ENCODE measurements at regions of chr5 and their contacts with region 1.

Region 1: GRCh38 chr5:83628360-83628759 is 92.3 kb downstream of the HAPLN1 start:
- DNase-seq: no peak
- H3K4me3 ChIP-seq: no peak overlapping the region
- H3K27ac ChIP-seq: no peak overlapping the region
- H3K4me1 ChIP-seq: peaks cover 0 to 4% (median 0%) of the 10 kb centered on the region in 4 experiments; a peak in 1 of 7 replicates
- H3K27me3 ChIP-seq: no peaks in the 10 kb centered on the region
- CTCF ChIP-seq: no peak
- EP300 ChIP-seq: no peak
- POLR2A ChIP-seq: no peak
- RAD21 ChIP-seq: no peak

Region 2: GRCh38 chr5:83608122-83608521 is 20.2 kb before region 1 on chr5:
- CTCF ChIA-PET with region 1: interaction called, 14 read pairs
- POLR2A ChIA-PET with region 1: no interaction called
- DNase-seq: peak; percentile 31 to 62
- H3K4me3 ChIP-seq: no peak overlapping the region
- H3K27ac ChIP-seq: no peak overlapping the region
- H3K4me1 ChIP-seq: peaks cover 0 to 3% (median 0%) of the 10 kb centered on the region in 4 experiments; a peak in 2 of 7 replicates
- H3K27me3 ChIP-seq: no peaks in the 10 kb centered on the region
- CTCF ChIP-seq: peak; percentile 43 to 81 (median 75)
- EP300 ChIP-seq: no peak
- POLR2A ChIP-seq: no peak
- RAD21 ChIP-seq: peak; percentile 79 to 88

Region 3: DNA sequence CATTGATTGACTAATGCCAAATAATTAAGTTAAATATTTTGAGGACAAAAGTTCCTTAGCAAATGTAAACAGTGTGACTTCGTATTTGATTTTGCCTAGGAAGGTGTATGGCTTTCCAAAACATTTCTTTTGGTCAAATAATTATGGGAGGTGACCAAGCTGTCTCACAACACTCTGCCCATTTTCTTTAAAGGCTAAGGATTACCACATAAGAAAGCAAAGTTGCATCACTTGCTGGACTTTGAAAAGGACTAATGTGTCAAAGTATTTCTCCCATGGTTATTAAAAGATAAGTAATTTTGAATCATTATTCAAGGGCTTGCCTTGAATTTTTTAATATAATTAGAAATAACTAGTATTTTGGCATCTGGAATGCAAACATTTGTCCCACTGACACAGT is 17.6 kb after region 1 on chr5:
- CTCF ChIA-PET with region 1: no interaction called
- POLR2A ChIA-PET with region 1: no interaction called
- DNase-seq: no peak
- H3K4me3 ChIP-seq: no peak overlapping the region
- H3K27ac ChIP-seq: no peak overlapping the region
- H3K4me1 ChIP-seq: peaks cover 0 to 5% (median 0%) of the 10 kb centered on the region in 4 experiments; a peak in 2 of 7 replicates
- H3K27me3 ChIP-seq: no peaks in the 10 kb centered on the region
- CTCF ChIP-seq: no peak
- EP300 ChIP-seq: no peak
- POLR2A ChIP-seq: no peak
- RAD21 ChIP-seq: no peak

Region 4: DNA sequence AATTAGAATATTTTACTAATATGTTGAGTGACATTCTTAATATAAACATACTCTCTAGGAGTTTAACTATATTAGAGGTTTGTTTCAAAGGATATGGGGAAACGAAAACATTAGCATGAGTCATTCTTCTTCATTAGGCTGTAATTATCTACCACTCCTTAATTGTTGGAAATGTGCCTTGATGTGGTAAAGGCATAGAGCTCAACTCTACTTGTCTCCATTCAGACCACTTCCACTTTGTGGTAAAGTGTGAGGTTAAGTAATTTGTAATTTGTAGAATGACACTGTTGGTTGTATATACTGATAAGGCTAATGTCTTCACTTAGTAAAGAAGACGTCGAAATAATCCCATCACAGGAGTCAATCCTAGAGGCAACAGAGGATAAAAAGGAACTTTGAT is 34.2 kb after region 1 on chr5:
- CTCF ChIA-PET with region 1: no interaction called
- POLR2A ChIA-PET with region 1: no interaction called
- DNase-seq: no peak
- H3K4me3 ChIP-seq: no peak overlapping the region
- H3K27ac ChIP-seq: no peak overlapping the region
- H3K4me1 ChIP-seq: 0 out of 7 replicates have a peak, but pooled peaks cover 0 to 2% (median 0%) of the 10 kb centered on the region in 4 experiments
- H3K27me3 ChIP-seq: no peaks in the 10 kb centered on the region
- CTCF ChIP-seq: no peak
- EP300 ChIP-seq: no peak
- POLR2A ChIP-seq: no peak
- RAD21 ChIP-seq: no peak

Region 5: GRCh38 chr5:83864652-83865051 is 236.3 kb after region 1 on chr5:
- CTCF ChIA-PET with region 1: no interaction called
- POLR2A ChIA-PET with region 1: no interaction called
- DNase-seq: no peak
- H3K4me3 ChIP-seq: no peak overlapping the region
- H3K27ac ChIP-seq: no peak overlapping the region
- H3K4me1 ChIP-seq: no peaks in the 10 kb centered on the region
- H3K27me3 ChIP-seq: no peaks in the 10 kb centered on the region
- CTCF ChIP-seq: no peak
- EP300 ChIP-seq: no peak
- POLR2A ChIP-seq: no peak
- RAD21 ChIP-seq: no peak

Measured in H1 (cell line).